AG04450 (cell line): ENCODE measurements at regions of chr3 and their contacts with region 1.

Region 1: DNA sequence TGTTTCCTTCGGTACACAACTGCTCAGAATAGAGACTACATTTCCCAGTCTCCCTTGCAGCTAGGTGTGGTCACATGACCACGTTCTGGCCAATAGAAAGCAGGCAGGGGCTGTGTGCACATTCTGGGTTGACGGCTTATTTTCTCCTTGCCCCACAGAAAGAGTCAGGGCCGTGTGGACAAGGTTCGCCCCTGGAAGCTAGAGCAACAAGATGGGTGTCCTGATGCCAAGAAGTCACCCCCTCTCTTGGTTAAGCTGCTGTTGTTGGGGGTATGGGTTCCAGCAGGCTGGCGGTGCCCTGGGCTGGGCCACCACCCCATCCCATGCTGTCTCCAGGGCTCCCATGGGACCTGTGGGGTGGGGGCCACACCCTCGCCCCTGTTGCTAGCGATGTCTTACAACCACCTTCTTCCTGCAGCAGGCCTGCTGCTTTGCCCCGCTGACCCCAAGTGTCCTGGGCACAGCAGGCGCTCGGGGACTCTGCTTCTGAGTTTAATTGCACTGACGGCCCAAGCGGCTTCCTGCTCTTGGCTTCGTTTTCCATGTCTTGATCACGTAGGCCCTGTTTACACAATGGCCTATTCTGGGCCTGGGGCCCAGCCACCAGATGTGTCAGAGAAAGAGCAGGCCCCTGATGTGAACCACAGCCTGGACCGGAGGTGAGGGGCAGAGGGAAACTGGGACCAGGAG is 24.9 kb downstream of the ABTB1 start:
- DNase-seq: peak; percentile 72
- H3K4me3 ChIP-seq: peak overlapping the region; percentile 7; the same call in 1 of the 2 replicates
- H3K27ac ChIP-seq: peak overlapping the region; percentile 96
- H3K27me3 ChIP-seq: no peaks in the 10 kb centered on the region
- CTCF ChIP-seq: no peak

Region 2: GRCh38 chr3:126197854-126198584 is 1499.7 kb before region 1 on chr3:
- CTCF ChIA-PET with region 1: interaction called, 10 read pairs
- POLR2A ChIA-PET with region 1: no interaction called
- DNase-seq: peak; percentile 38
- H3K4me3 ChIP-seq: no peak overlapping the region
- H3K27ac ChIP-seq: no peak overlapping the region
- H3K27me3 ChIP-seq: no peaks in the 10 kb centered on the region
- CTCF ChIP-seq: peak; percentile 82

Region 3: DNA sequence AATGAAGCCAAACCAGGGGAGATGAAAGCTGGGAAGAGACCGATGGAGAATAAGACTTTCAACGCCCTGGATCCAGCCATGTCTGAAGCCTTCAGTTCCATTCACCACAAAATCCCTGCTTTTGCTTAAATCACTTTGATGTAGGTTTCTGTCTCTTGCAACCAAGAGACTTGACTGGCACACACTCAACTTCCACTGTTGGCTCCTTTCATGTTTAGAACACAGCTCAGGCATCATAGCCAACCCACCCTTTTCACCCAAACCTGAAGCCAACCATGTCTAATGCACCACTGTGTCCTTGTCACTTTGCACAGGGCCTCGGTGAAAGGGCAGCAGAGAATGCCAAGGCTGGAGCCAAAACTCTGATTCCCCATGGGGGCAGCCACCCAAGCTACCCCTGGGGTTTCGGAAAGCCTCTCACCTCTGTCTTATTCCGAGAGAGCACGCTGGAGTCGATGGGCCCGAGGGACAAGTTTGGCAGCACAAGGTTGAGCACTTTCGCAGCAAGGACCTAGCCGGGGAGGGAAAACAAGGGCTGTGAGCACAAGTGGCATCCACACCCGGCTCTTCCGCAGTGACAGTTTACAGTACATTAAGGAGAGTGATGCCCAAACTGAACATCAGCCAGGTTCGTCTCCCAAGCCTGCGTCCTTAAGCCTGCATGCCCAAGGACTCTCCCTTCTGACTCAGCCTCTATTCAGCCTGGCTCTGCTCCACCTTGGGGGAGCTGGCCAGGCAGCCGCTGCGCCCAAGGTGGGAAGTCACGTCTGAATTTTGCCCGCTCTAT is 12.7 kb after region 1 on chr3:
- CTCF ChIA-PET with region 1: interaction called, 14 read pairs
- POLR2A ChIA-PET with region 1: interaction called, 5 read pairs
- DNase-seq: no peak
- H3K4me3 ChIP-seq: no peak overlapping the region
- H3K27ac ChIP-seq: no peak overlapping the region
- H3K27me3 ChIP-seq: no peaks in the 10 kb centered on the region
- CTCF ChIP-seq: no peak

Region 4: DNA sequence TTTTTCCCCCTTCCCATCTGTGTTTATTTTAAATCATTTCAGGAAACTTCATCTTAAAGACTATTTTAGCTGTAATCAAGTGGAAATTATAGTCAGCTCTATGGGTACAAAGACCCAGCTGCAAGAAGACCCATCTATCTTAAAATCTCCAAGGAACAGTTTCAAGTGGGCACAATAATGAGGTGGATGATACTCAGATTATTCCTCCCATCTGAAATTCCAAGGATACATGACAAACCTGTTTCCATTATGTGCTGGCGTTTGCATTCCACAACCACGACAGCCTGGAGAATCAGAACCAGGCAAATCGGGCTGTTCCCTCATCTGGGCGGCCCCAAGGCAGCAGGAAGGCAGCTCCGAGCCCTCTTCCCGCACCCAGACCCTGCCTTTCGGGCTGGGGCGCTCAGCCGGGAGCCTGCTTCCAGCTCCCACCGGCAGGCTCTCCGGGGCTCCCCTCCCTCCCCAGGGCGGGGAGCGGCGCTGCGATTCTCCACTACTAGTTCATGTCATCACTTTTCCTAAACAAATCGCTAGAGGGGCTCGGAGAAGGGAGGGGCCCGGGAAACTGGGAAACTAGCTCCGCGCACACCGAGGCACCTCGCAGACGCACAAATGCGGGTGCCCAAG is 124.5 kb after region 1 on chr3 and contains the start of gene MGLL:
- CTCF ChIA-PET with region 1: interaction called, 14 read pairs
- POLR2A ChIA-PET with region 1: no interaction called
- DNase-seq: no peak
- H3K4me3 ChIP-seq: peak within 1 kb of the TSS; percentile 77
- H3K27ac ChIP-seq: peak within 1 kb of the TSS; percentile 80
- H3K27me3 ChIP-seq: no peaks in the 10 kb centered on the region
- CTCF ChIP-seq: no peak
- polyA plus RNA-seq, gene MGLL: 49.1 and 51.5 TPM in 2 replicates

Region 5: DNA sequence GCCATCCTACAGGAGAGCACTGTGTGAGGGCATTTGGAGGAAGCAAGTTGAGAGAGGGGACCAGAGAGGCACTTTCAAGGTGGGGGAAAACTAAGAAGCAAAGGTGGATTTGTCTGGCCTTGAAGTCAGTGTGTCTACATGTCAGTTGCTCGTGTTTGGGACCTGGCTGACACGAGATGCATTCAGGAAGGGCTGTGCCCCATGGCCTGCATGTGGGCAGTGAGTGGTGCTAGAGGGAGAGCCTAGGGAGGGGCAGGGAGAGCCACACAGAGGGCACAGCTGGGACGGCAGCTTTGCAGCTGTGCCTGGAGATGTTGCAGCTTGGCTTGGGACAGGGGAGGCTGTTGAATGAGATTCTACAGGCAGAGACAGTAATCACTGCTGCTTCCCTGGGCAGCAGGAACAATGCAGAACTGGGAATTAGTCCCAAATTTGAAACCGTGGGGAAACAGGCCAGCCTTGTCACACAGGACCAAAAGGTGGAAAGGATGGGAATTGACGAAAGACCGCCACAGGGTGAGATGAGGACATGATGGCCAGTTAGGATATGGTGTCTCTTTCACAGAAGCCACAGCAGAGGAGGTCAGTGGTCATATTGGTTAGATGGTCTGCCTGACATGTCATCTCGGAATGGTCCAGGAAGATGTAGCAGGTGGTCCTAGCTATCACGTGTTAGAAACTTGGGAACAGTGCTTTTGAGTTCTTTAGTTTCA is 364.5 kb after region 1 on chr3:
- CTCF ChIA-PET with region 1: no interaction called
- POLR2A ChIA-PET with region 1: interaction called, 12 read pairs
- DNase-seq: no peak
- H3K4me3 ChIP-seq: no peak overlapping the region
- H3K27ac ChIP-seq: peak overlapping the region; percentile 94
- H3K27me3 ChIP-seq: no peaks in the 10 kb centered on the region
- CTCF ChIP-seq: no peak

Region 6: DNA sequence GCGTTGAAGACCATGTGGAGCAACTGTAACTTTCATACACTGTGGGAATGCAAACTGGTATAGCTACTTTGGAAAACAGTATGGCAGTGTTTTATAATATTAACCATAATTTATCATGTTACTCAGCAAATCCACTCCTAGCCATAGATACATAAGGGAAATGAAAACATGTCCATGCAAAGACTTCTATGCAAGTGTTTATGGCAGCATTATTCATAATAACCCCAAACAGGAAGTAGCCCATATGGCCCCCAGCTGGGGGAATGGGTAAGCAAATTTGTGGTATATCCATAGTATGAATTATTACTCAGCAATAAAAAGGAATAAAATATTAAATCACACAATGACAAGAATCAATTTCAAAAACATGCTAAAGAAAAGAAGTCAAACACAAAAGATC is 818.3 kb after region 1 on chr3:
- CTCF ChIA-PET with region 1: no interaction called
- POLR2A ChIA-PET with region 1: no interaction called
- DNase-seq: no peak
- H3K4me3 ChIP-seq: no peak overlapping the region
- H3K27ac ChIP-seq: no peak overlapping the region
- H3K27me3 ChIP-seq: peaks cover 18% of the 10 kb centered on the region
- CTCF ChIP-seq: no peak